Activated B cell treated with CpG ODN at 0.5 μM for 24 hours (primary cell): ENCODE measurements at regions of chr20 and their contacts with region 1.

Region 1: GRCh38 chr20:4740774-4741431 is 19.2 kb downstream of the PRND start:
- DNase-seq: peak; percentile 48
- ATAC-seq: peak; percentile 58
- H3K4me3 Mint-ChIP-seq: no peak overlapping the region
- H3K27ac Mint-ChIP-seq: no peak overlapping the region
- H3K4me1 Mint-ChIP-seq: no peaks in the 10 kb centered on the region
- H3K27me3 Mint-ChIP-seq: peaks cover 3% of the 10 kb centered on the region
- CTCF ChIP-seq: peak; percentile 84

Region 2: DNA sequence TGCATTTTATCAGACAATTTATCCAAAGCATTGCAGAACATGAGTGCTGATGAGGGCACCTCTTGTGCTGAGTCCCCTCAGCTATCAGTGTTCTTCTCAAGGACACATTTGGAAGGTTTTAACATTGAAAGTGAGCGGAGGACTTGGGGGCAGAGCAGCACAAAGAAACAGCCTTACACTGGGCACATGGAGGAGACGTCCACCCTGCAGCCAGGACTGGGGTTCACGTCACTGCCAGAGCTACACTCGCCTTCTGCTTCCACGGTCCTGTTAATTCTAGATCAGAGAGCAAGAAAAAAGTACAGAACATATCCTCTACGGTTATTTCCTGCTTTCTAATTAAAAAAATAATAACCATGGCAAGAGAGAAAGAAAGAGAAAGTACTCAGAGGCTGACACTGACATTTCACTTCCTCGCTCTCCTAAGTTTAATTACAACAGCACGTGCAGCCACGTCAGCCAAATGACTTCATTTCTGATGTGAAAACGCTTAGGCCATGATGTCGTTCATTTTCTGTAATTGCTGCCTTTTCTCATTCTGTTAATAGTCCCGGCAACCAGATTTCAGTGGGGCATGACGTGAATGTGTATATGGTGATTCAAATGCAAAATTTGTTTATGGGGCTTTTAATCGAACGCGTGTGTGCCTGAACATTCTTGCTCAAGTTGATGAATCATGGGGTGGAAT is 14.0 kb before region 1 on chr20:
- CTCF ChIA-PET with region 1: interaction called, 9 read pairs
- POLR2A ChIA-PET with region 1: no interaction called
- intact Hi-C with region 1: loop called (anchors 2 kb)
- DNase-seq: no peak
- ATAC-seq: peak; percentile 80
- H3K4me3 Mint-ChIP-seq: peak overlapping the region; percentile 61
- H3K27ac Mint-ChIP-seq: peak overlapping the region; percentile 89
- H3K4me1 Mint-ChIP-seq: peaks cover 19% of the 10 kb centered on the region
- H3K27me3 Mint-ChIP-seq: no peaks in the 10 kb centered on the region
- CTCF ChIP-seq: no peak

Region 3: DNA sequence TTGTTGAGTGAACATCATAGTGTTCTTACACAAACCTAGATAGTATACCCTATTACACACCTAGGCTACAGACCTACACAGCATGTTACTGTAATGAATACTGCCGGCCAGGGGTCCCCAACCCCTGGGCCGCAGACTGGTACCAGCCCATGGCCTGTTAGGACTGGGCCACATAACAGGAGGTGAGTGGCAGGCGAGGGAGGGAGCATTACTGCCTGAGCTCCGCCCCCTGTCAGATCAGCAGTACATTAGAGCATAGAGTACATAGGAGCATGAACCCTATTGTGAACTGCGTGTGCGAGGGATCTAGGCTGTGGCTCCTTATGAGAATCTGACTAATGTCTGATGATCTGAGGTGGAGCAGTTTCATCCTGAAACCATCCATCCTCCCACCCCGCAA is 107.1 kb after region 1 on chr20:
- CTCF ChIA-PET with region 1: no interaction called
- POLR2A ChIA-PET with region 1: no interaction called
- intact Hi-C with region 1: no loop called
- DNase-seq: no peak
- ATAC-seq: no peak
- H3K4me3 Mint-ChIP-seq: no peak overlapping the region
- H3K27ac Mint-ChIP-seq: no peak overlapping the region
- H3K4me1 Mint-ChIP-seq: peaks cover 26% of the 10 kb centered on the region
- H3K27me3 Mint-ChIP-seq: no peaks in the 10 kb centered on the region
- CTCF ChIP-seq: no peak

Region 4: GRCh38 chr20:4949833-4950178 is 208.9 kb after region 1 on chr20:
- CTCF ChIA-PET with region 1: interaction called, 10 read pairs
- POLR2A ChIA-PET with region 1: no interaction called
- intact Hi-C with region 1: no loop called
- DNase-seq: no peak
- ATAC-seq: peak; percentile 53
- H3K4me3 Mint-ChIP-seq: peak overlapping the region; percentile 76
- H3K27ac Mint-ChIP-seq: peak overlapping the region; percentile 70
- H3K4me1 Mint-ChIP-seq: peaks cover 63% of the 10 kb centered on the region
- H3K27me3 Mint-ChIP-seq: no peaks in the 10 kb centered on the region
- CTCF ChIP-seq: no peak